ENCODE measurements at regions of chr17 and their contacts with region 1.

Region 1: DNA sequence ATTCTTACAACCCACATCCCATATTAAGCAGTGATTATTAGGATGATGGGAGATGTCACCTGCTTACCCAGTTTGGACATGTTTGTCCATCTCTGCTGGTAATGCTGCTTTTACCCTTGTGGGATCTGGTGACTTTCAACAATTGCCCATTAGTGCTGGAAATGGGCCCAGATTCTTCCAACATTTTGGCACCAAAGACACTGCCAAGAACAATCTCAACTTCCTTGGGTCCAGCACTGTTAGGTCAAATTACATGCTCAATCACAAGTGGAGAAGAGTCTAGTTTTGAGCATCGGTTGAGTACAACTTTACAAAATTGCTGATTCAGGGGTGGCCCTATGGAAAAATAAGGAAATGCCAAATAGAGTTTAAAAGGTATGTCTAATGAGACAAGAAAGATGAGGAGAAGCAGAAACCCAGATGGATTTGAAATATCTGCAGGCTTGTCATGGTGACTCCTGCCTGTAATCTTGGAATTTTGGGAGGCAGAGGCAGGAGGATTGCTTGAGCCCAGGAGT is 13.0 kb upstream of the ZFP3 start:
- DNase-seq: no peak
- H3K4me3 ChIP-seq: no peak overlapping the region
- H3K27ac ChIP-seq: no peak overlapping the region
- H3K4me1 ChIP-seq: no peaks in the 10 kb centered on the region
- H3K27me3 ChIP-seq: no peaks in the 10 kb centered on the region
- CTCF ChIP-seq: no peak
- EP300 ChIP-seq: no peak
- POLR2A ChIP-seq: no peak

Region 2: DNA sequence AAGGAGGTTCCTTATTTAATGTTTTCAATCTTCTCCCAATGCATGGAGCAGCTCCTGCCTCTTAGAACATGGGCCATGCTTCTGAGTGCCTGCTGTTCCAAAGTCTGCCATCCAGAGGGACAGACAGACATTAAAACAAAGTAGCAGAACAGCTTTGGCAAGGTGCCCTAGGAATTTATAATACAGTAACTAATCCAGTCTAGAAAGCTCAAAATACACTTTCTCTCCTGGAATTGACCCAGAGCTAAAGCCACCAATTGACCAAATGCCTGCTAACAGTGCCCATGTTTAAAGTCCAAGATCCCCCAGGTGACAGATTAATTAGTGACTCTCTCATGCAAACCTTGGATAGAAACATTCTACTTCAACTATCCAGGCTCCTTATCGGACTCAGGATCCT is 151.3 kb before region 1 on chr17:
- intact Hi-C with region 1: loop called (anchors 10 kb)
- DNase-seq: no peak
- H3K4me3 ChIP-seq: no peak overlapping the region
- H3K27ac ChIP-seq: no peak overlapping the region
- H3K4me1 ChIP-seq: peaks cover 5 to 9% (median 8%) of the 10 kb centered on the region in 4 donors
- H3K27me3 ChIP-seq: no peaks in the 10 kb centered on the region
- CTCF ChIP-seq: no peak
- EP300 ChIP-seq: no peak
- POLR2A ChIP-seq: no peak

Region 3: GRCh38 chr17:4969551-4970173 is 95.6 kb before region 1 on chr17:
- intact Hi-C with region 1: loop called (anchors 10 kb)
- DNase-seq: no peak
- H3K4me3 ChIP-seq: peak overlapping the region in 1 of 4 donors; percentile 64
- H3K27ac ChIP-seq: peak overlapping the region; percentile 3 to 97 (median 93)
- H3K4me1 ChIP-seq: peaks cover 28 to 65% (median 39%) of the 10 kb centered on the region in 4 donors
- H3K27me3 ChIP-seq: no peaks in the 10 kb centered on the region
- CTCF ChIP-seq: no peak
- EP300 ChIP-seq: no peak
- POLR2A ChIP-seq: no peak